ENCODE measurements at regions of chr17 and their contacts with region 1.

Region 1: DNA sequence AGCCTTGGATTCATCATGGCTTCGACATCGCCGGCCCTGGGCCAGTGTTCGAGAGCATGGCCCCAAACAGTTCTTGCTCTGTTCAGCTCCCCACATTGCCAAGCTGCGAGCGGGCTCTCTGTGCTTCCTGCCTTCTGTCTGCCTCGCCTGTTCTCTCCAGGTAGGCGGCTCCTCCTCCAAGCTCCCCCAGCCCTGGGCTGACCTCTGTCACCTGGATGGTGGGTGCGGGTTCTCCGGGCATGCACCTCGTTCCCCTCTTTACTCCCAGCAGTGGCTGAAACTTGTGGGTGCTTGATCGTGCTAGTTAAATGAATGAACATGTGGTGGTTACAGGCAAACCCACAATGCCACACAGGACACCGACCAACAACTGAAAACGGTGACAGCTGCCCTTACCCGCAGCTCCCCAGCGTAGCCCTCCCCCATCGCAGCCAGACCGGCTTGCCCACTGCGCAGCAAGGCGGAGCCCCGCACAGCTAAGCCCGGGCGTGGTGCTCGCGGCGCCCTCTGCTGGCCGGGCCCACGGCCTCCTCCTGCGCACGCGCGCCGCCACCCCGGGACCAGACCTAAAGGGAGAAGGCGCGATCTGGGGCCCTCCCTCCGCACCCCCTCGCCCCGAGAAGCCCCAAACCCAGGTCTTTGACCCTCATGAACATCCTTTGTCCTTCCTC is 23.0 kb upstream of the EIF1 start:
- DNase-seq: peak; percentile 91
- H3K4me3 ChIP-seq: peak overlapping the region; percentile 28 to 31
- H3K27ac ChIP-seq: peak overlapping the region; percentile 78 to 81
- H3K4me1 ChIP-seq: peaks cover 7% of the 10 kb centered on the region
- H3K27me3 ChIP-seq: no peaks in the 10 kb centered on the region
- CTCF ChIP-seq: peak; percentile 94 to 99 (median 98)
- POLR2A ChIP-seq: peak; percentile 77

Region 2: GRCh38 chr17:40615295-40615988 is 1050.3 kb before region 1 on chr17:
- intact Hi-C with region 1: loop called (anchors 10 kb)
- DNase-seq: peak; percentile 34
- H3K4me3 ChIP-seq: no peak overlapping the region
- H3K27ac ChIP-seq: no peak overlapping the region
- H3K4me1 ChIP-seq: peaks cover 8% of the 10 kb centered on the region
- H3K27me3 ChIP-seq: no peaks in the 10 kb centered on the region
- CTCF ChIP-seq: peak in 3 of 4 experiments; percentile 42 to 68 (median 47)
- POLR2A ChIP-seq: no peak

Region 3: DNA sequence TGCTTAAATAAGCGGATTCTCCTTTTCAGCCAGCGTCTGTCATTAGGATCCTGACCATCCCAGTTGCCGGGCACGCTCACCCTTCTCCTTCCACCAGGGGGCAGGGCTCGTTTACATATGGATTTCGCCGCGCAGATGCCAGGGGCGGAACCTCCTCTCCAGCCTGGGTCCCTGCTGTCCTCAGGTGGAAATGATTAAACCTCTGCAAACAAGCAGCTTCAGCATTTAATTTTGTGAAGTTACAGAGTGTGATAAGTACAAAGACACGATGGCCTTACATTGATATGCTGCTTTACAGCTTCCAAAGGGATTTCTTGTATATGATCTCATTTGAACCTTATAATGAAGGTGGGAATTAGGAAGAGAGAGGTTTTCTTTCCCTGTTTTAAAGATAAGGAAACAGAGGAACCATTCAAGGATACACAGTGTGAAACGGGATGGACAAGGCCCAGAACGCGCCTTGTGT is 862.1 kb before region 1 on chr17:
- intact Hi-C with region 1: loop called (anchors 2 kb)
- DNase-seq: peak; percentile 82
- H3K4me3 ChIP-seq: no peak overlapping the region
- H3K27ac ChIP-seq: no peak overlapping the region
- H3K4me1 ChIP-seq: no peaks in the 10 kb centered on the region
- H3K27me3 ChIP-seq: no peaks in the 10 kb centered on the region
- CTCF ChIP-seq: peak; percentile 33 to 91 (median 82)
- POLR2A ChIP-seq: no peak

Region 4: GRCh38 chr17:40857535-40857934 is 808.2 kb before region 1 on chr17:
- intact Hi-C with region 1: loop called (anchors 2 kb)
- DNase-seq: no peak
- H3K4me3 ChIP-seq: no peak overlapping the region
- H3K27ac ChIP-seq: no peak overlapping the region
- H3K4me1 ChIP-seq: no peaks in the 10 kb centered on the region
- H3K27me3 ChIP-seq: no peaks in the 10 kb centered on the region
- CTCF ChIP-seq: no peak
- POLR2A ChIP-seq: no peak

Region 5: GRCh38 chr17:40909351-40909750 is 756.4 kb before region 1 on chr17:
- intact Hi-C with region 1: loop called (anchors 2 kb)
- DNase-seq: peak; percentile 84
- H3K4me3 ChIP-seq: no peak overlapping the region
- H3K27ac ChIP-seq: peak overlapping the region; percentile 72 to 81
- H3K4me1 ChIP-seq: no peaks in the 10 kb centered on the region
- H3K27me3 ChIP-seq: no peaks in the 10 kb centered on the region
- CTCF ChIP-seq: peak; percentile 49 to 93 (median 82)
- POLR2A ChIP-seq: no peak

Region 6: GRCh38 chr17:41548844-41549595 is 116.7 kb before region 1 on chr17:
- intact Hi-C with region 1: loop called (anchors 5 kb)
- DNase-seq: peak; percentile 83
- H3K4me3 ChIP-seq: peak overlapping the region; percentile 2 to 5
- H3K27ac ChIP-seq: peak overlapping the region; percentile 63 to 77
- H3K4me1 ChIP-seq: peaks cover 8% of the 10 kb centered on the region
- H3K27me3 ChIP-seq: no peaks in the 10 kb centered on the region
- CTCF ChIP-seq: peak; percentile 61 to 91 (median 82)
- POLR2A ChIP-seq: peak; percentile 35

Region 7: GRCh38 chr17:41648411-41649195 is 17.1 kb before region 1 on chr17:
- intact Hi-C with region 1: loop called (anchors 1 kb)
- DNase-seq: peak; percentile 86
- H3K4me3 ChIP-seq: peak overlapping the region; percentile 5 to 6
- H3K27ac ChIP-seq: peak overlapping the region; percentile 36 to 47
- H3K4me1 ChIP-seq: peaks cover 7% of the 10 kb centered on the region
- H3K27me3 ChIP-seq: no peaks in the 10 kb centered on the region
- CTCF ChIP-seq: peak; percentile 96 to 99 (median 98)
- POLR2A ChIP-seq: peak; percentile 39